AG04449 (cell line): ENCODE measurements at regions of chr2 and their contacts with region 1.

Region 1: GRCh38 chr2:9565436-9566153 is 10.0 kb upstream of the ADAM17 start:
- DNase-seq: peak; percentile 84
- H3K4me3 ChIP-seq: no peak overlapping the region; the same call in 1 of the 2 replicates
- CTCF ChIP-seq: no peak

Region 2: GRCh38 chr2:9463698-9464034 is 101.9 kb before region 1 on chr2:
- CTCF ChIA-PET with region 1: no interaction called
- POLR2A ChIA-PET with region 1: no interaction called
- DNase-seq: no peak
- H3K4me3 ChIP-seq: no peak overlapping the region
- CTCF ChIP-seq: no peak

Region 3: GRCh38 chr2:9555297-9556141 is 10.1 kb before region 1 on chr2 and contains the start of gene ADAM17:
- CTCF ChIA-PET with region 1: interaction called, 8 read pairs
- POLR2A ChIA-PET with region 1: interaction called, 15 read pairs
- DNase-seq: peak; percentile 76
- H3K4me3 ChIP-seq: peak within 1 kb of the TSS; percentile 95
- CTCF ChIP-seq: peak; percentile 79